ENCODE measurements at regions of chr3 and their contacts with region 1.

Region 1: DNA sequence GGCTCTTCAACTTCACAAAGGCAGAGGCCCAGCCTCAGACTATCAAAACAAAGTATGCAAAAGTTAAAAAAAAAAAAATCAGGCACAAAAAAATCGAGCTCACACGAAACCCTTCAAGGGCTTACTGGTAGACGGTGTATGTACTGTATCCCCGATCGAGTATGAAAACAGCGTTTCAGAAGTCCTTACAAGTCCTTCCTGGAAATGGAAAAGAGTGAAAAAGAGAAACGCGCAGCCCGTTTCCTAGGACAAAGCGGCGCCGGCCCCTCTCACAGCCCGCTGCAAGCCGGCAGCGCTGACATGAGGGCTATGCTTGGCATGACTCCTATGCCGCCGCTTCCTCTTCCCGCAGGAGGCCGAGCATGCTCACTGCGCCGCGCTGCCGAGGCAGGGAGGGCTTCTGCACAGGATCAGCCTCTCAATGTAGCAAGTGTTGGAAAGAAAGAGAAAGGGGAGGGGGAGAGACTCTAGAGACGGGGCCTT is at the start of gene VGLL4:
- DNase-seq: peak; percentile 65
- H3K4me3 Mint-ChIP-seq: peak within 1 kb of the TSS; percentile 91
- H3K27ac Mint-ChIP-seq: peak within 1 kb of the TSS; percentile 92
- H3K4me1 Mint-ChIP-seq: peaks cover 31% of the 10 kb centered on the region
- H3K27me3 Mint-ChIP-seq: peaks cover 8% of the 10 kb centered on the region
- total RNA-seq, gene VGLL4: 66.6 and 69.8 TPM in 2 replicates

Region 2: GRCh38 chr3:11236595-11237461 is 406.8 kb before region 1 on chr3:
- intact Hi-C with region 1: loop called (anchors 5 kb)
- DNase-seq: peak; percentile 55
- H3K4me3 Mint-ChIP-seq: no peak overlapping the region
- H3K27ac Mint-ChIP-seq: no peak overlapping the region
- H3K4me1 Mint-ChIP-seq: peaks cover 24% of the 10 kb centered on the region
- H3K27me3 Mint-ChIP-seq: peaks cover 26% of the 10 kb centered on the region

Region 3: GRCh38 chr3:11367143-11367693 is 276.4 kb before region 1 on chr3:
- intact Hi-C with region 1: loop called (anchors 5 kb)
- DNase-seq: no peak
- H3K4me3 Mint-ChIP-seq: no peak overlapping the region
- H3K27ac Mint-ChIP-seq: no peak overlapping the region
- H3K4me1 Mint-ChIP-seq: peaks cover 31% of the 10 kb centered on the region
- H3K27me3 Mint-ChIP-seq: no peaks in the 10 kb centered on the region

Region 4: DNA sequence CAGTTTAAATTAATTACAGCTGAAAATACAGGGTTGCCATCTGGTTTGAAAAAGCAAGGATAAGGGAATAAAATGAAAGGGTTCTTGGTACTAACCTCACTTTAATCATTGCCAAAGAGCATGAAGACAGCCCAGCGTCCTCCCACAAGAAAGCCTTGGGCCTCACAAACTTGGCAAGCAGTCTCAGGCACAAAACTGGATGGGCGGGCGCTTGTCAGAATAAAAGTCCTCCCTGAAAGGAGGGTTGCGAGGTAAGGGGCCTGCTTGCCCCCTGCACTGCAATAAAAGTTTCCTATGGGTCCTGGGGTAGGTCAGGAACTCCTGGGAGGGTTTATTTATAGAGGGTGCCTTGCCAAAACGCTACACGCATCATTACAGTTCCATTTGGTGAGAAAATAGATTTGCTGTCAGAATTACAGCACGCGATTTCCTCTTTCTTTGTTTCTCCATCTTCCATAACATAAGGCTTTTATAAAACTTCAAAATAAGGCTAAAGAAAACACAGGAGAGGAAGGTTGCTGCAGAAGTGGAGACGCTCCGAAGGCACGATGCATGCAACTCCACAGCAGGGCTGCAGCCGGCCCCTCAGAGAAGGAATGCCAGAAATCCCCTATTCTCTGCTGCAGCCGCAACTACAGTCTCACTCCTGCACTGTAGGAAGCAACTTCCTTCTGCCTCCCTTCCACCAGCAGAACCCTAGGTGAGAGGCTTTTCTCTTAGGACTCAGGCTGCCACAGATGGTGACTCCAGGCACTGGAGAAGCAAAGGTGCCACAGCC is 61.3 kb before region 1 on chr3:
- intact Hi-C with region 1: loop called (anchors 5 kb)
- DNase-seq: no peak
- H3K4me3 Mint-ChIP-seq: peak overlapping the region; percentile 54
- H3K27ac Mint-ChIP-seq: peak overlapping the region; percentile 43
- H3K4me1 Mint-ChIP-seq: peaks cover 39% of the 10 kb centered on the region
- H3K27me3 Mint-ChIP-seq: no peaks in the 10 kb centered on the region

Region 5: GRCh38 chr3:11626084-11626463 is 17.6 kb before region 1 on chr3:
- intact Hi-C with region 1: loop called (anchors 1 kb)
- DNase-seq: peak; percentile 22
- H3K4me3 Mint-ChIP-seq: peak overlapping the region; percentile 37
- H3K27ac Mint-ChIP-seq: peak overlapping the region; percentile 87
- H3K4me1 Mint-ChIP-seq: peaks cover 73% of the 10 kb centered on the region
- H3K27me3 Mint-ChIP-seq: no peaks in the 10 kb centered on the region

Measured in activated T-helper 2 cell treated with anti-CD3 and anti-CD28 coated beads, Interferon-gamma antibody, Interleukin-2, Interleukin-4, amounts not matched to agents 10 μg/mL and 5 μg/mL and 100 μg/mL, durations not matched to agents 14 hours and 24 hours and 36 hours (primary cell).